ENCODE measurements at regions of chr12 and their contacts with region 1.

Region 1: GRCh38 chr12:89461649-89462612 is 62.7 kb downstream of the GALNT4 start:
- DNase-seq: peak in 2 of 9 experiments; percentile 59 to 71
- ATAC-seq: peak; percentile 73
- H3K4me3 ChIP-seq: no peak overlapping the region
- H3K4me3 Mint-ChIP-seq: peak overlapping the region; percentile 50
- H3K27ac ChIP-seq: no peak overlapping the region
- H3K27ac Mint-ChIP-seq: no peak overlapping the region
- H3K4me1 ChIP-seq: peaks cover 5% of the 10 kb centered on the region
- H3K4me1 Mint-ChIP-seq: peaks cover 20% of the 10 kb centered on the region
- H3K27me3 ChIP-seq: no peaks in the 10 kb centered on the region
- H3K27me3 Mint-ChIP-seq: no peaks in the 10 kb centered on the region
- CTCF ChIP-seq: peak; percentile 77

Region 2: GRCh38 chr12:88141770-88142609 is 1319.9 kb before region 1 on chr12 and contains the starts of genes CEP290 and TMTC3:
- CTCF ChIA-PET with region 1: no interaction called
- POLR2A ChIA-PET with region 1: no interaction called
- intact Hi-C with region 1: loop called in 1 of 2 experiments (anchors 10 kb)
- DNase-seq: peak; percentile 81 to 99 (median 90)
- ATAC-seq: peak; percentile 92
- H3K4me3 ChIP-seq: peak within 1 kb of the TSS; percentile 82 to 84
- H3K4me3 Mint-ChIP-seq: peak within 1 kb of the TSS; percentile 99
- H3K27ac ChIP-seq: peak within 1 kb of the TSS; percentile 75 to 85
- H3K27ac Mint-ChIP-seq: peak within 1 kb of the TSS; percentile 97
- H3K4me1 ChIP-seq: peaks cover 18% of the 10 kb centered on the region
- H3K4me1 Mint-ChIP-seq: peaks cover 48% of the 10 kb centered on the region
- H3K27me3 ChIP-seq: no peaks in the 10 kb centered on the region
- H3K27me3 Mint-ChIP-seq: no peaks in the 10 kb centered on the region
- CTCF ChIP-seq: no peak
- total RNA-seq, gene CEP290: 7.7 to 10.7 TPM
- total RNA-seq, gene TMTC3: 3.9 to 4.4 TPM

Region 3: GRCh38 chr12:89040146-89040964 is 421.6 kb before region 1 on chr12:
- CTCF ChIA-PET with region 1: interaction called, 16 read pairs
- POLR2A ChIA-PET with region 1: no interaction called
- intact Hi-C with region 1: no loop called
- DNase-seq: peak; percentile 12 to 72 (median 57)
- ATAC-seq: peak; percentile 85
- H3K4me3 ChIP-seq: no peak overlapping the region
- H3K4me3 Mint-ChIP-seq: peak overlapping the region; percentile 36
- H3K27ac ChIP-seq: peak overlapping the region in 1 of 2 experiments; percentile 24
- H3K27ac Mint-ChIP-seq: peak overlapping the region; percentile 45
- H3K4me1 ChIP-seq: peaks cover 14% of the 10 kb centered on the region
- H3K4me1 Mint-ChIP-seq: peaks cover 25% of the 10 kb centered on the region
- H3K27me3 ChIP-seq: no peaks in the 10 kb centered on the region
- H3K27me3 Mint-ChIP-seq: no peaks in the 10 kb centered on the region
- CTCF ChIP-seq: no peak

Region 4: DNA sequence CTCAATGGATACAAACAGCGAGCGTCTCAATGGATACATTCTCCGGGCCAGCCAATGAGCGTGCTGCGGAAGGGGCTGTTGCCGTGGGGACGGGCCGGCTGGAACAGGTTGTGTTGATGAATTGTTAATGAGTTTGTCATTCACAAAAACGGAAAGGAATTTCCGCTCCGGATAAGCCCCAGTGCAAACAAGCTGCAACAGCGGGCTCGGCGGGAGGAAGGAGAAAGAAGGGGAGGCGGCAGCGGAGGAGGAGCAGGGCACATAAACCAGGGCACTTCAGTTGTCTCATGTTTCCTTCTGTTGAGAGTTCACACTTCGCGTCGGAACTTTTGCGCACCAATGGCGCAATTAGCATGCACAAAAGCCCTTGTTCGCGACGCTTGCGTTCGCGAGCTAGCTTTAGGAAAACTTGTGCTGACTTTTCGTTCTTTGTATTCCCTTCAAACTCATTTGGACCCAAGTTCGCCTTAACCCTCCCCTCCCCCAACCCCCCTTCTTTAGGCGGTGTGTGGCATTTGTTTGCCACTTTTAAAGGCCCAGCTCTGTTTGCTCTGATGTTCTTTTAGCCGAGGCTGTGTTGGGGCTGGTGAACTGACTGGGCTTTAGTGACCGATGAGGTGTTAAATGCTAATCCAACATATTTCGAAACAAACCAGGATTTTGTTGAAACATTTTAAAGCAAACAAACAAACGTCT is 109.3 kb before region 1 on chr12 and contains the start of gene DUSP6:
- CTCF ChIA-PET with region 1: interaction called, 5 read pairs
- POLR2A ChIA-PET with region 1: no interaction called
- intact Hi-C with region 1: loop called (anchors 5 kb)
- DNase-seq: peak; percentile 55 to 91 (median 76)
- ATAC-seq: peak; percentile 71
- H3K4me3 ChIP-seq: peak within 1 kb of the TSS; percentile 54 to 74
- H3K4me3 Mint-ChIP-seq: peak within 1 kb of the TSS; percentile 91
- H3K27ac ChIP-seq: peak within 1 kb of the TSS; percentile 45 to 55
- H3K27ac Mint-ChIP-seq: peak within 1 kb of the TSS; percentile 88
- H3K4me1 ChIP-seq: peaks cover 24% of the 10 kb centered on the region
- H3K4me1 Mint-ChIP-seq: peaks cover 43% of the 10 kb centered on the region
- H3K27me3 ChIP-seq: no peaks in the 10 kb centered on the region
- H3K27me3 Mint-ChIP-seq: peaks cover 3% of the 10 kb centered on the region
- CTCF ChIP-seq: no peak
- total RNA-seq, gene DUSP6: 3.0 to 3.9 TPM

Region 5: GRCh38 chr12:89524541-89525285 is 62.8 kb after region 1 on chr12 and contains the start of gene GALNT4:
- CTCF ChIA-PET with region 1: interaction called, 89 read pairs
- POLR2A ChIA-PET with region 1: interaction called, 11 read pairs
- intact Hi-C with region 1: loop called in 1 of 2 experiments (anchors 1 kb)
- DNase-seq: peak; percentile 45 to 88 (median 74)
- ATAC-seq: peak; percentile 70
- H3K4me3 ChIP-seq: peak within 1 kb of the TSS; percentile 78 to 93
- H3K4me3 Mint-ChIP-seq: peak within 1 kb of the TSS; percentile 92
- H3K27ac ChIP-seq: peak within 1 kb of the TSS; percentile 70 to 86
- H3K27ac Mint-ChIP-seq: peak within 1 kb of the TSS; percentile 87
- H3K4me1 ChIP-seq: peaks cover 28% of the 10 kb centered on the region
- H3K4me1 Mint-ChIP-seq: peaks cover 61% of the 10 kb centered on the region
- H3K27me3 ChIP-seq: no peaks in the 10 kb centered on the region
- H3K27me3 Mint-ChIP-seq: no peaks in the 10 kb centered on the region
- CTCF ChIP-seq: peak; percentile 41
- total RNA-seq, gene GALNT4: 4.6 to 5.3 TPM

Region 6: DNA sequence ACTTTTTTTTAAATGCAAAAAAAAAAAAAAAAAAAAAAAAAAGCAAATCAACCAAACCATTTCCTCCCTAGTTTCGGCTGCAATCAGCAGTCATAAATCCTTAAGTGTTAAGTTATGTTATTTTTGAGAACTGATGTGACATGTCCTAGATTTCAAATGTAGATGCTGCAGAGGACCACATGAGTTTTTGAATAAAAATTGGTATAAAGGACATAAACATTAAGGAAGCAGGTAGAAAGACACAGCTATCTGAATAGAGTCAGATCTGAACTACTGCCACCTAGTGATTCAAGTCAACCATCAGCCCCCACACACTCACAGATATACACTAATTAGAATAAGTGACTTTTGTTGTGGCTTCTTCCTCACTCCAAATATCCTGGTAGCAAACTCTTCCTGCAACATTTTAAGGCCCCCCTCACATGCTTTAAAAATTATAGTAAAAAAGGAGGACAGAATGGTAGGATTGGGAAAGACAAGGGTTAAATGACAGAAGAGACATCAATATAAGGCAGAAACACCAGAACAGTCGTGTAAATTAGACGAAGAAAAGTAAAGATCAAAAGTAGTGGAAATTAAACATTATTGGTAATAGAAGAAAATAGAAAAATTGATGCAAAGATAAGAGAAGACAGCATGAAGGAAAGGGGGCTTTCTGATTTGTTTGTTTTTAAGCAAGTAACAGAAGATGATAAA is 641.2 kb after region 1 on chr12:
- CTCF ChIA-PET with region 1: no interaction called
- POLR2A ChIA-PET with region 1: interaction called, 4 read pairs
- intact Hi-C with region 1: loop called in 1 of 2 experiments (anchors 10 kb)
- DNase-seq: peak in 3 of 9 experiments; percentile 6 to 65 (median 53)
- ATAC-seq: peak; percentile 56
- H3K4me3 ChIP-seq: no peak overlapping the region
- H3K4me3 Mint-ChIP-seq: peak overlapping the region; percentile 68
- H3K27ac ChIP-seq: no peak overlapping the region
- H3K27ac Mint-ChIP-seq: no peak overlapping the region
- H3K4me1 ChIP-seq: no peaks in the 10 kb centered on the region
- H3K4me1 Mint-ChIP-seq: peaks cover 4% of the 10 kb centered on the region
- H3K27me3 ChIP-seq: no peaks in the 10 kb centered on the region
- H3K27me3 Mint-ChIP-seq: peaks cover 2% of the 10 kb centered on the region
- CTCF ChIP-seq: peak; percentile 70

Measured in CD8-positive, alpha-beta T cell (primary cell).